ENCODE measurements at regions of chr20 and their contacts with region 1.

Region 1: DNA sequence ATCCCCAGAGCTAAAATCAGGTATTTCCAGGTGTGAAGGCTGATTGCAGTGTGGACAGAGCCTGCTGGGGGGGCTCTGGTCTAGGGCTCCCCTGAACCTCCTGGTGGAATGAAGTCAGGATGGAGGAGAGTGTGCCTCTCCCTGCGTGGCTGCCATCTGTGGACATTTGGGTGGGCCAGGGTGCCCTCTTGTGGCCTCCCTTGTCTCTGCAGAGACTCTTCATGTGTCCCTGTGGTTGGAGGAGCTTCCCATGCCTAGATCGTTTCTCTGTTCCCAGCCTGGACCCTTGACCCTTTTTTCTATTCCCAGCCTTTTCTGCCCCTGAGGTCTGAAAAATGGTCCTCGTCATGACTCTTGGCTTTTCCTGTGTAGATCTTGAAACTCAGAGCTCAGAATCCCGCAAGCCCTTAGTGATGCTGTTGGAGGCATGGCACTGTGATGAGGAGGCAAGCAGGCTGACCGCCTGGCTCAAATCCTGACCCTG is 9.9 kb upstream of the PSMF1 start:
- DNase-seq: peak; percentile 75
- ATAC-seq: peak; percentile 98
- H3K4me3 Mint-ChIP-seq: no peak overlapping the region
- H3K27ac Mint-ChIP-seq: no peak overlapping the region
- H3K4me1 Mint-ChIP-seq: no peaks in the 10 kb centered on the region
- H3K27me3 Mint-ChIP-seq: no peaks in the 10 kb centered on the region; the same call in none of the 2 replicates
- CTCF ChIP-seq: peak; percentile 67

Region 2: GRCh38 chr20:833450-834150 is 274.9 kb before region 1 on chr20 and contains the start of gene FAM110A:
- CTCF ChIA-PET with region 1: interaction called, 11 read pairs
- POLR2A ChIA-PET with region 1: no interaction called
- DNase-seq: peak; percentile 96
- ATAC-seq: peak; percentile 97
- H3K4me3 Mint-ChIP-seq: peak within 1 kb of the TSS; percentile 76
- H3K27ac Mint-ChIP-seq: no peak within 1 kb of the TSS
- H3K4me1 Mint-ChIP-seq: peaks cover 12% of the 10 kb centered on the region
- H3K27me3 Mint-ChIP-seq: peaks cover 20% of the 10 kb centered on the region
- CTCF ChIP-seq: no peak
- total RNA-seq, gene FAM110A: 17.2 to 18.8 TPM (median 18.0 TPM) in 3 replicates

Region 3: GRCh38 chr20:986733-987355 is 121.6 kb before region 1 on chr20:
- CTCF ChIA-PET with region 1: interaction called, 15 read pairs
- POLR2A ChIA-PET with region 1: no interaction called
- DNase-seq: no peak
- ATAC-seq: peak; percentile 43
- H3K4me3 Mint-ChIP-seq: no peak overlapping the region
- H3K27ac Mint-ChIP-seq: no peak overlapping the region
- H3K4me1 Mint-ChIP-seq: peaks cover 11% of the 10 kb centered on the region
- H3K27me3 Mint-ChIP-seq: no peaks in the 10 kb centered on the region; the same call in 1 of the 2 replicates
- CTCF ChIP-seq: no peak

Region 4: GRCh38 chr20:1094751-1095150 is 13.7 kb before region 1 on chr20:
- CTCF ChIA-PET with region 1: interaction called, 24 read pairs
- POLR2A ChIA-PET with region 1: no interaction called
- DNase-seq: no peak
- ATAC-seq: no peak; the same call in 1 of the 2 replicates
- H3K4me3 Mint-ChIP-seq: no peak overlapping the region
- H3K27ac Mint-ChIP-seq: no peak overlapping the region
- H3K4me1 Mint-ChIP-seq: no peaks in the 10 kb centered on the region
- H3K27me3 Mint-ChIP-seq: peaks cover 16% of the 10 kb centered on the region
- CTCF ChIP-seq: no peak

Region 5: GRCh38 chr20:1212607-1213396 is 104.3 kb after region 1 on chr20:
- CTCF ChIA-PET with region 1: interaction called, 10 read pairs
- POLR2A ChIA-PET with region 1: no interaction called
- DNase-seq: peak; percentile 80
- ATAC-seq: peak; percentile 96
- H3K4me3 Mint-ChIP-seq: no peak overlapping the region
- H3K27ac Mint-ChIP-seq: no peak overlapping the region
- H3K4me1 Mint-ChIP-seq: peaks cover 30% of the 10 kb centered on the region
- H3K27me3 Mint-ChIP-seq: peaks cover 32% of the 10 kb centered on the region
- CTCF ChIP-seq: peak; percentile 73